GM23248 (cell line): ENCODE measurements at regions of chr5 and their contacts with region 1.

Region 1: GRCh38 chr5:16489322-16489791 is 23.8 kb upstream of the ZNF622 start:
- DNase-seq: peak; percentile 81
- H3K4me3 ChIP-seq: no peak overlapping the region
- H3K27ac ChIP-seq: no peak overlapping the region
- H3K4me1 ChIP-seq: peaks cover 17% of the 10 kb centered on the region
- H3K27me3 ChIP-seq: no peaks in the 10 kb centered on the region

Region 2: DNA sequence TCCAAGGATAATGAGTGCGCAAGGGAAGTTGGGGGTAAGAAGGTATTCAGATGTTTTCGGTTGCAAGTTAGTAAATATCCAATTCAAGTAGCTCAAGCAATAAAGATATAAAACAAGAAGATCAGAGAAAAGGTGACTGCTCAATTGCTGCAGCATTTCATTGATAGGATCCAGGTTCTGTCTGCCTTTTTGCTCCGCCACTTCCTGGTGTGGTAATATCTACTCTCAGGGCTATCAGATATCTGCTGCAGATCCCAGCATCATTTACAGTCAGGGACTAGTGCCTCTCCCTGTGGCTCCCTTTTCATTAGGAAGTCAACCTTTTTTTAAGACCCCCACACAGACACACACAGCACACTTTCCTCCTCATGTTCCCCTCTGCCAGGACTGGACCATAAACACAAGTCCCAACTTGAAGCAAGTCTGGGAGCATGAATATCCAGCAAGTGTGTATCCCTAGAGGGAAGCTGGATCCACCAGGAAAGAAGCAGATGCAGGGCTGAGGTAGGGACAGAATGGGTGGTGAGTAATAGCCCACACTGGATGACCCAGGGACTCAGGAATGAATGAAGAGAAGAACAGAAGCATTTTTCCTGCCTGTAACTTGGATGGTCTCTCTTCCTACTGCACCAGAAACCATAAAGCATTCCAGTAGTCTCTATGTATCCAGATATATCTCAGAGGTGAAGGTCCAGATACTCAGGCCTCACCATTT is 77.5 kb before region 1 on chr5:
- in situ Hi-C with region 1: no loop called
- DNase-seq: peak; percentile 85
- H3K4me3 ChIP-seq: no peak overlapping the region; the same call in 1 of the 2 replicates
- H3K27ac ChIP-seq: peak overlapping the region; percentile 43
- H3K4me1 ChIP-seq: peaks cover 29% of the 10 kb centered on the region
- H3K27me3 ChIP-seq: no peaks in the 10 kb centered on the region

Region 3: GRCh38 chr5:16552666-16553343 is 63.4 kb after region 1 on chr5:
- in situ Hi-C with region 1: loop called (anchors 10 kb)
- DNase-seq: peak; percentile 86
- H3K4me3 ChIP-seq: no peak overlapping the region
- H3K27ac ChIP-seq: no peak overlapping the region
- H3K4me1 ChIP-seq: peaks cover 21% of the 10 kb centered on the region
- H3K27me3 ChIP-seq: no peaks in the 10 kb centered on the region; the same call in 1 of the 2 replicates